ENCODE measurements at regions of chr20 and their contacts with region 1.

Region 1: GRCh38 chr20:20052074-20052970 is at the starts of genes CFAP61 and CRNKL1:
- DNase-seq: peak; percentile 98 to 99
- H3K4me3 ChIP-seq: peak within 1 kb of the TSS; percentile 53
- H3K4me3 Mint-ChIP-seq: peak within 1 kb of the TSS; percentile 97
- H3K27ac Mint-ChIP-seq: peak within 1 kb of the TSS; percentile 99
- H3K4me1 ChIP-seq: peaks cover 8% of the 10 kb centered on the region
- H3K4me1 Mint-ChIP-seq: no peaks in the 10 kb centered on the region
- H3K27me3 ChIP-seq: no peaks in the 10 kb centered on the region
- H3K27me3 Mint-ChIP-seq: no peaks in the 10 kb centered on the region
- CTCF ChIP-seq: no peak
- total RNA-seq, gene CFAP61: not detected in 2 replicates
- total RNA-seq, gene CRNKL1: 27.0 and 30.6 TPM in 2 replicates

Region 2: DNA sequence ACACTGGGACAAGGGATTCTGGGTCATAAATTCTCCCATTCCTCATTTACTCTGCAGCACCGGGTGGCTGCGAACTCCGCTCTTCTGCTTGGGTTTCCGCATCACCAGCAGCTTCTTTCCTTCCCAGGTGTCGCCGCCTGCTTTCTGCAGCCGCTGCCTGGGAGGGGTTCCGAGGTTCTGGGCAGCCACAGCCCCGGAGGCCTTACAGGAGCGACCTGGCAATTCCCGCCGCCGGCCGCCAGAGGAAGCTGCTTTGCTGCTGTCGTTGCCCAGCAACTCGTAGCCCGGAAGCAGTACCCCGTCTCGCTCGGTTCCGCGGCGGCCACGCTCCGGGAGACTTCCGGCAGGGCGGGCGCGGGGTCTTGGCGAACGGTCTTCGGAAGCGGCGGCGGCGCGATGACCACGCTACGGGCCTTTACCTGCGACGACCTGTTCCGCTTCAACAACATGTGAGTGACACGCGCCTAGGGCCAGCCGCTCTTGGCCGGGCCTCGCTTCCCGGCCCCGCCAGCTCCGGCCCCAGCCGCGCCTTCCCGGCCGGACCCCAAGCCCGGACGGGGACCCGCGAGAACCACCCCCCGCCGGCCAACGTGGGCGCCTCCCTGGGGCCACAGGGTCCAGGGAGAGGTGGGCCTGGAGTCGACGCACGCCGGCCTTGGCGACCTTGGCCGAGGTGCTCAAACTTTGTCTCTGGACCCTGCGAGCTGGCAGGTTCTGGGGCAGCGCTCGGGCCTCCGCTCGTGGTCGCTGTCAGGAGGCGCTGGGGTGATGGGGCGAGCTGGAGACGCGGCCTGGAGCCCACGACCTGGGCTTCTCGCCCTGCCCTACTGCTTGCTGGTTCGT is 35.1 kb before region 1 on chr20 and contains the start of gene NAA20:
- CTCF ChIA-PET with region 1: interaction called, 17 read pairs
- POLR2A ChIA-PET with region 1: interaction called, 12 read pairs
- intact Hi-C with region 1: no loop called
- DNase-seq: peak; percentile 97
- H3K4me3 ChIP-seq: peak within 1 kb of the TSS; percentile 83
- H3K4me3 Mint-ChIP-seq: peak within 1 kb of the TSS; percentile 90
- H3K27ac Mint-ChIP-seq: peak within 1 kb of the TSS; percentile 94
- H3K4me1 ChIP-seq: peaks cover 21% of the 10 kb centered on the region
- H3K4me1 Mint-ChIP-seq: peaks cover 14% of the 10 kb centered on the region
- H3K27me3 ChIP-seq: no peaks in the 10 kb centered on the region
- H3K27me3 Mint-ChIP-seq: no peaks in the 10 kb centered on the region
- CTCF ChIP-seq: peak; percentile 60 to 88
- total RNA-seq, gene NAA20: 77.5 and 81.5 TPM in 2 replicates

Region 3: DNA sequence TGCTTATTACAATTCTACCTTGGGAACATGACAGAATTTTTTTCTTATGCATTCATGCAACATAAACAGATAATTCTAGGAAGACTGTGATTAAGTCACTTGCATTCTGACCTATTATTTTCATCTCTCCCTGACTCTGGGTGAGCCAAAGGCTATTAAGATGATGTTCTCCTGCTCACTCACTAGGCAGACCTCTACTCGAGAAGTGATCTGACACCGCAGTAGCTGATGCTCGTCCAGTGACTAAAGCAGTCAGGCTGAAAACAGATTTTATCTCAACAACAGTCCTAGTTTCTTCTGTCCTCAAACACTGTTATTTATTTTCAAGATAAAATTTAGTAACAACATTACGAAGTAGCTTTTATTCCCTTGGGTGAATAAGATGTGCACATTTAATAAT is 17.8 kb before region 1 on chr20:
- CTCF ChIA-PET with region 1: interaction called, 3 read pairs
- POLR2A ChIA-PET with region 1: interaction called, 3 read pairs
- intact Hi-C with region 1: loop called (anchors 2 kb)
- DNase-seq: no peak
- H3K4me3 ChIP-seq: no peak overlapping the region
- H3K4me3 Mint-ChIP-seq: no peak overlapping the region
- H3K27ac Mint-ChIP-seq: no peak overlapping the region
- H3K4me1 ChIP-seq: 0 out of 2 replicates have a peak, but pooled peaks cover 8% of the 10 kb centered on the region
- H3K4me1 Mint-ChIP-seq: peaks cover 12% of the 10 kb centered on the region
- H3K27me3 ChIP-seq: no peaks in the 10 kb centered on the region
- H3K27me3 Mint-ChIP-seq: no peaks in the 10 kb centered on the region
- CTCF ChIP-seq: no peak

Region 4: DNA sequence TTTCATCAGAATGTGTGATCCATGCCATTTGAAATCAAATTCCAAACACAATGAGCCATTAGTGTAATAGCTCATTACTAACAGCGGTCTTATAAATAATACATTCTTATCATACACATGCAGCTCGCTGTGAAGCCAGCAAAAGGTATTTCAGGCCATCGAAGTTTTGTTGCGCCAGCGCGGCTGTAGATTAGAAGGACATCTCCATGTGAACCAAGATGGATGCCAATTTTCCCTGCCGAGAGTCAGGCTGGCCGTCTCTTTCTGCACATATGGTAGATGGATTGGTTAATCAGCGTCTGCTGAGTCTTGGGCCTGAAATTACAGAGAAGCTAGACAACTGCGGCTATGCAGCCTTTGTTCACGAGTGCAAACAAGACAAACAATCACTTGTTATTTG is 44.1 kb after region 1 on chr20:
- CTCF ChIA-PET with region 1: no interaction called
- POLR2A ChIA-PET with region 1: no interaction called
- intact Hi-C with region 1: no loop called
- DNase-seq: no peak
- H3K4me3 ChIP-seq: no peak overlapping the region
- H3K4me3 Mint-ChIP-seq: no peak overlapping the region
- H3K27ac Mint-ChIP-seq: no peak overlapping the region
- H3K4me1 ChIP-seq: no peaks in the 10 kb centered on the region
- H3K4me1 Mint-ChIP-seq: no peaks in the 10 kb centered on the region
- H3K27me3 ChIP-seq: no peaks in the 10 kb centered on the region
- H3K27me3 Mint-ChIP-seq: peaks cover 10% of the 10 kb centered on the region
- CTCF ChIP-seq: no peak